ENCODE measurements at regions of chr6 and their contacts with region 1.

Region 1: DNA sequence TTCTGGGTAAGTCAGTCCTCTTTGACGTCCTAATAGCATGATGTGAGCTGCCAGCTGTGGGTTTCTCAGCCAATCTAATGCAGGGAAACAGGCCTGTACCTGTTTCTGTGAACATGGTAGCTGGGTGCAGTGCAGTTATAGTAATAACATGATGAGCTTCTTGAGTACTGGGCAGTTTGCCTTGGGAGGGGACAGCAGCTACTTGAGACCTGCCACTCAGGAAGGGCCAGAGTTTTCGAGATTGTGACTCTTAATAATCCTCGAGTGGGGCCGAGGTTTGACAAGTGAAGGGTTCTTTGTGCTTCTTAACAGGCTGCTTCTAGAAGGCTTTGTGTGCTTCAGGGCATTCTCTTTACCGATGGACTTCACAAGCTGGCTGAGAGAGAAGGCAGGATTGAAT is 180.1 kb downstream of the JARID2 start:
- DNase-seq: no peak
- H3K4me3 ChIP-seq: no peak overlapping the region
- H3K27ac ChIP-seq: no peak overlapping the region
- H3K4me1 ChIP-seq: no peaks in the 10 kb centered on the region
- H3K27me3 ChIP-seq: no peaks in the 10 kb centered on the region
- CTCF ChIP-seq: no peak
- POLR2A ChIP-seq: no peak

Region 2: DNA sequence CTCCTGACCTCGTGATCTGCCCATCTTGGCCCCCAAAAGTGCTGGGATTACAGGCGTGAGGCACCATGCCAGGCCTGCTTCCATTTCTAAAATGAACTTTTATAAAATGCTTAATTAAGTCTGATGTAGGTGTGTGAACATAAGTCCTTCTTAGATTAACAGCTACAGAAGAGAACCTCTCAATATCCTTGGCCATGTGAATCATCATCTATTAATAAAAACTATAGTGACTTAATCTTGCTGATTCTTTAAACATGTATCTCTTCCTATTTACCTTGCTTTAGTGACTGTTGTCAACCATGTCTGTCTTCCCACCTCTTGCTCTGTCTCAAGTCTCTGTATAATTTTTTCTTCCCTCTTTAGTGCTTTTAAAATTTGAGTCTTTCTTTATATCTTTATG is 53.0 kb before region 1 on chr6:
- intact Hi-C with region 1: loop called (anchors 2 kb)
- DNase-seq: no peak
- H3K4me3 ChIP-seq: no peak overlapping the region
- H3K27ac ChIP-seq: no peak overlapping the region
- H3K4me1 ChIP-seq: no peaks in the 10 kb centered on the region
- H3K27me3 ChIP-seq: no peaks in the 10 kb centered on the region
- CTCF ChIP-seq: no peak
- POLR2A ChIP-seq: no peak

Region 3: GRCh38 chr6:15901141-15902115 is 475.5 kb after region 1 on chr6:
- intact Hi-C with region 1: no loop called
- DNase-seq: no peak
- H3K4me3 ChIP-seq: no peak overlapping the region
- H3K27ac ChIP-seq: no peak overlapping the region
- H3K4me1 ChIP-seq: no peaks in the 10 kb centered on the region
- H3K27me3 ChIP-seq: no peaks in the 10 kb centered on the region
- CTCF ChIP-seq: no peak
- POLR2A ChIP-seq: no peak

Measured in breast epithelium (tissue), 4 donors.